CD4-positive, alpha-beta T cell (primary cell): ENCODE measurements at regions of chr16 and their contacts with region 1.

Region 1: DNA sequence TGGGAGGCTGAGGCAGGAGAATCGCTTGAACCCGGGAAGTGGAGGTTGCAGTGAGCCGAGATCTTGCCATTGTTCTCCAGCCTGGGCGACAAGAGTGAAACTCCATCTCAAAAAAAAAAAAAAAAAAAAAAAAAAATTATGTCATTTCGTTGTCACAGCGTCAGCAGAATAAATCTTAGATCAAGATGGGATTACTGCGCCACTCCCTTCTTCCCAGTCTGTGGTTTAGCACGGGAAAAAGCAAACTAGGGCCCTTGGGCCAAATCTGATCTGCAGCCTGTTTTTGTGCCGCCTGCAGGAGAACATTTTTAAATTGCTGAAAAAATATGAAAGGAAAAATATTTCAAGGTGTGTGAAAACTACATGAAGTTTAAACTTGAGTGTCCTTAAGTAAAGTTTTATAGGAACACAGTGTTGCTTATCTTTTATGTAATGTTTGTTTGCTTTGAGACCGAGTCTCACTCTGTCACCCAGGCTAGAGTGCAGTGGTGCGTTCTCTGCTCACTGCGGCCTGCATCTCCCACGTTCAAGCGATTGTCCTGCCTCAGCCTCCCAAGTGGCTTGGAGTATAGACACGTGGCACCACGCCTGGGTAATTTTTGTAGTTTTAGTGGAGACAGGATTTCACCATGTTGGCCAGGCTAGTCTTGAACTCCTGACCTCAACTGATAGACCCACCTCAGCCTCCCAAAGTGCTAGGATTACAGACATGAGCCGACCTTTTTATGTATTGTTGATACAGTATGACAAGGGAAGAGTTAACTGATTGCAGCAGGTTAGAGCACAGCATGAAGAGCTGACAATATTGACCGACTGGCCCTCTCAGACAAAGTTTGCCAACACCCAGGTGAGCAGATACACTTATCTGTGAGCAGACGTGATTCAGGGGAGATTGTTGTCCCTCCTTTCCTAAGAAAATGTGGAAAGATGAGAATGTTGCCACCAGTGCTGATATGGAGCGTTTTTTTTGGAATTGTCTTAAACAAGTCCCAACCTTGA is 373.5 kb downstream of the WWOX start:
- DNase-seq: no peak
- ATAC-seq: no peak
- H3K4me3 ChIP-seq: no peak overlapping the region
- H3K4me3 Mint-ChIP-seq: no peak overlapping the region
- H3K27ac ChIP-seq: no peak overlapping the region
- H3K27ac Mint-ChIP-seq: no peak overlapping the region
- H3K4me1 ChIP-seq: no peaks in the 10 kb centered on the region
- H3K4me1 Mint-ChIP-seq: no peaks in the 10 kb centered on the region
- H3K27me3 ChIP-seq: no peaks in the 10 kb centered on the region
- H3K27me3 Mint-ChIP-seq: no peaks in the 10 kb centered on the region
- CTCF ChIP-seq: no peak

Region 2: GRCh38 chr16:78425891-78426510 is 47.0 kb before region 1 on chr16:
- CTCF ChIA-PET with region 1: no interaction called
- POLR2A ChIA-PET with region 1: no interaction called
- intact Hi-C with region 1: loop called in 1 of 2 experiments (anchors 1 kb)
- DNase-seq: no peak
- ATAC-seq: no peak
- H3K4me3 ChIP-seq: no peak overlapping the region
- H3K4me3 Mint-ChIP-seq: no peak overlapping the region
- H3K27ac ChIP-seq: no peak overlapping the region
- H3K27ac Mint-ChIP-seq: no peak overlapping the region
- H3K4me1 ChIP-seq: no peaks in the 10 kb centered on the region
- H3K4me1 Mint-ChIP-seq: no peaks in the 10 kb centered on the region
- H3K27me3 ChIP-seq: no peaks in the 10 kb centered on the region
- H3K27me3 Mint-ChIP-seq: no peaks in the 10 kb centered on the region
- CTCF ChIP-seq: no peak

Region 3: DNA sequence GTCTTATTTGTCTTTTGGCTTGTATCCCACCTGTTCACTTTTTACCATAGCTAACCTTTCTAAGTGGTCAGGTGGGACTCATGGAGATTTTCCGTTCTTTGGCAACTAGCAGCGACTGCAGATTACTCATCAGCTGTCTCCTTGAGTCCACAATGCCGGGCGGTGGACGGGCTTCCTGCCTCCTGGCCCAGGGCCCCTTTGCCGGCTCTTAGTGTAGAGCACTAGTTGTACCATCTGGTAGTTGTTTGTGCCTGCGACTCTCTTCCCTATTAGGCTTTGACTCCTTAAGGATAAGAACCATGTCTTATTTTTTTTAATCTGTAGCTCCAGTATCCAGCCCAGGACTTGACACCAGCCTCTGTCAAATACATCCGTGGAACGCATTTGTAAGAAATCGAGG is 26.4 kb after region 1 on chr16:
- CTCF ChIA-PET with region 1: no interaction called
- POLR2A ChIA-PET with region 1: no interaction called
- intact Hi-C with region 1: no loop called
- DNase-seq: no peak
- ATAC-seq: no peak
- H3K4me3 ChIP-seq: no peak overlapping the region
- H3K4me3 Mint-ChIP-seq: no peak overlapping the region
- H3K27ac ChIP-seq: no peak overlapping the region
- H3K27ac Mint-ChIP-seq: no peak overlapping the region
- H3K4me1 ChIP-seq: no peaks in the 10 kb centered on the region
- H3K4me1 Mint-ChIP-seq: no peaks in the 10 kb centered on the region
- H3K27me3 ChIP-seq: no peaks in the 10 kb centered on the region
- H3K27me3 Mint-ChIP-seq: no peaks in the 10 kb centered on the region
- CTCF ChIP-seq: no peak